Dorsolateral prefrontal cortex (tissue), 120 donors: ENCODE measurements at regions of chr7 and their contacts with region 1.

Region 1: DNA sequence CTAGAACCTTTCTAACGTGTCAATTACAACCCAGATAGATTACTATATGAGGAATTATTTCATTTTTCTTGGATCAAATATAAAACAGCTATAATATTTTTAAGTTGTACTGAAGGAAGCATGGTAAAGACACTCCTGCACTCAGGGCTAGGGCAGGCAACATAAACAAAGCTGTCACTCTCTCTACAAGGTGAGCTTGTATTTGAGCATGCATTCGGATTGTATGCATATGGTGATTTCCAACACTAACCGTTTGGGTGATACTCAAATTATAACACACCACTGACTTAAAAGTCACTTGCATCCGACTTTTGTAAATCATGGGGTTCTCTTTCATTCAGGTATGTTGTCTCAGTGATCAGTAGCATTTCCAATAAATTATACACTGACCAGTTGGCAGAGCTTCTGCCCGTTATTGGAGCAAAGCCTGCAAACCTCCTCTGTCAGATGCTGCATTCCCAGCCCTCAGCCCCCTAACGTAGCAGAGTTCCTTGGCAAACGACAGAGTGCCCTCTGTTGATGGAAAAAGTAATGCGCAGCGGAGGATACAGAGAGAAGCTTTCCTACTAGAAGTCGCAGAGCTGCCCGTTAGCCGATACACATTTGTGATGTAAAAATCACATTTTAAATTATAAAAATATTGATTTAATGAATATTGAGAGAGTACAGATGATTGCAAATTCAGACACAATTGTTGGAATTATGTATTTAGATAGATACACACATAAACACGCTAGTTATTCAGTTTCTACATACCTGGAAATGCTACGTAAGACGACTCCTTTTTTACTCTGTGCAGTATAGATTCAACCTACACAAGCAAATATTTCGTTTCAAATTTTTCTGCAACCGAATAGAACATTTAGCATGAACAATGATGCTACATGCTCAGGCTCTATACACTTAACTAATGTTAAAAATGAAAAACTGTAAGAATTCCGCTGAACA is 173.9 kb upstream of the SP4 start:
- DNase-seq: peak in 8 of 10 donors; percentile 24 to 62 (median 46)
- H3K4me3 ChIP-seq: no peak overlapping the region
- H3K27ac ChIP-seq: no peak overlapping the region
- H3K27me3 ChIP-seq: peaks cover 0 to 92% (median 49%) of the 10 kb centered on the region in 45 donors
- CTCF ChIP-seq: peak in 55 of 56 donors; percentile 22 to 75 (median 59)

Region 2: GRCh38 chr7:20778063-20778721 is 475.8 kb before region 1 on chr7:
- intact Hi-C with region 1: loop called (anchors 5 kb)
- DNase-seq: peak in 1 of 10 donors; percentile 66
- H3K4me3 ChIP-seq: peak overlapping the region in 54 of 59 donors; percentile 4 to 64 (median 44)
- H3K27ac ChIP-seq: no peak overlapping the region
- H3K27me3 ChIP-seq: peaks cover 6 to 100% (median 96%) of the 10 kb centered on the region in 45 donors
- CTCF ChIP-seq: peak in 53 of 56 donors; percentile 18 to 76 (median 56)

Region 3: GRCh38 chr7:21140622-21141021 is 113.4 kb before region 1 on chr7:
- intact Hi-C with region 1: no loop called
- DNase-seq: no peak
- H3K4me3 ChIP-seq: no peak overlapping the region
- H3K27ac ChIP-seq: no peak overlapping the region
- H3K27me3 ChIP-seq: peaks cover 0 to 24% (median 3%) of the 10 kb centered on the region in 45 donors
- CTCF ChIP-seq: no peak

Region 4: DNA sequence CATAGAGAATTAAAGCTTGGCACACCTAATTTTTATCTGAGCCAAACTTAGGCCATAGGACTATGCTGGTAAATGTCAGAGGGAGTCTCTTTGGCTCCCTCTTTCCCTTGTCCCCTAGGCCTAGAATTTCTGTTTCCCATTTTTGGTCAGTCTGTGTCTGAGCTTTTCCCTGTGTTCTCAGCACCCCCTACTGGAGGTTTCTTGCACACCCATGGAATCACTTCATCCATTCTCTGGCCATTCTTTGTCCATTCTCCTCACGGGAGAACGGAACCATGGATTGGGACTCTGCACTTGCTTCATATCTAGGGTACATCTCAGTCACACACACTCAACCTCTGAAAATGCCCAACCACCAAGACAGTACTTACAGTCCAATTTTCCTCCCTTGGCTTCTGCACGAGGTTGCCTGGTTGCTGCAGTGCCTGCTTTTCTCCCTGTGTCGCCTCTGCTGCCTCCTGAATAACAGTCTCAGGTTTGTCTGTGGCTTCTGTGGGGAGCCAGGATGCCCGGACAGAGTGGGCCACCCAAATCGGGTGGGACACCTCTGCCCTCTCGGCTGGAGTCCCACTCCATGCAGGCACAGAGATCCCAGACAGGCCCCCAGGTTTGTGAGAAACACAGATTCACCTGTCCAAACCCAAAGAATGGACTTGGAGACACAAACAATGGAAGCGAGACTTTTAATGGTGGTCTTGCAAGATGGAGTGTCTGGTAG is 253.8 kb after region 1 on chr7:
- intact Hi-C with region 1: loop called (anchors 5 kb)
- DNase-seq: peak in 3 of 10 donors; percentile 11 to 53 (median 51)
- H3K4me3 ChIP-seq: no peak overlapping the region
- H3K27ac ChIP-seq: no peak overlapping the region
- H3K27me3 ChIP-seq: no peaks in the 10 kb centered on the region
- CTCF ChIP-seq: peak; percentile 49 to 83 (median 70)

Region 5: GRCh38 chr7:21767300-21767900 is 513.4 kb after region 1 on chr7:
- intact Hi-C with region 1: loop called in 1 of 2 experiments (anchors 5 kb)
- DNase-seq: peak in 1 of 10 donors; percentile 33
- H3K4me3 ChIP-seq: no peak overlapping the region
- H3K27ac ChIP-seq: no peak overlapping the region
- H3K27me3 ChIP-seq: peaks cover 0 to 6% (median 0%) of the 10 kb centered on the region in 45 donors
- CTCF ChIP-seq: peak in 54 of 56 donors; percentile 29 to 79 (median 56)

Region 6: DNA sequence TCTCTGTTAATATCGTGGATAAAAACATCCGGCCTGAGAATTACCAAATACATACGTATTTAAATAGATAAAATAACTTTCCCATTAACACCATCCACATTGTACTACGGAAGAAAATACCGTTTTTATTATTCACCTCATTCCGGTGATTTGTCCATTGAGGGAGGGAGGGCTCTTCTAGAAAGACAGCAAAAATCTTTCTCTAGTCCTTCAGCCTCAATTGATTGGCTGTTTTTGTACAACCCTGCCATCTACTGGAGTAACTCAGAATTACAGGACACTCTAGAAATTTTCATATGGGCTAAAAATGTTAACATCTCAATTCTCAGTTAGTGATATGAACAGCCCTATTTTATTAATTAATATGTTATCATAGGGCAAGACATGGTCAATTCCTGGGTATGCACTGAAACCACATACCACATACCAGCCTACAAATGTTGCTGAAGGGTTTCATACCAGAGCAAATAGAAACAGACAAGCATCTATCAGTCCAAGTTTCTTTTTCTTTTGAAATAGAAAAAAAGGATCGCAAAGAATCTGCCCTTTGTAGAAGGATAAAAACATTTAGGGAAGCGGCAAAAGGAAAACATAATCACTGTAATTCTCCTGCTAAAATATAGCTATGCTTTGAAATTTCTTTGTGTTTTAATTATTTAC is 747.5 kb after region 1 on chr7:
- intact Hi-C with region 1: loop called (anchors 2 to 10 kb)
- DNase-seq: no peak
- H3K4me3 ChIP-seq: peak overlapping the region in 29 of 59 donors; percentile 2 to 51 (median 28)
- H3K27ac ChIP-seq: no peak overlapping the region
- H3K27me3 ChIP-seq: peaks cover 0 to 6% (median 0%) of the 10 kb centered on the region in 45 donors
- CTCF ChIP-seq: peak; percentile 72 to 98 (median 88)

Region 7: GRCh38 chr7:22488643-22489462 is 1234.8 kb after region 1 on chr7:
- intact Hi-C with region 1: loop called in 1 of 2 experiments (anchors 10 kb)
- DNase-seq: peak; percentile 58 to 88 (median 76)
- H3K4me3 ChIP-seq: peak overlapping the region in 2 of 59 donors; percentile 1 to 30
- H3K27ac ChIP-seq: peak overlapping the region in 29 of 59 donors; percentile 3 to 78 (median 33)
- H3K27me3 ChIP-seq: no peaks in the 10 kb centered on the region
- CTCF ChIP-seq: peak; percentile 90 to 99 (median 97)